ENCODE measurements at regions of chr9 and their contacts with region 1.

Region 1: GRCh38 chr9:113657703-113658544 is 194.4 kb downstream of the RGS3 start:
- DNase-seq: peak; percentile 82 to 91
- ATAC-seq: peak; percentile 85 to 93 (median 90)
- H3K4me3 ChIP-seq: no peak overlapping the region
- H3K27ac ChIP-seq: no peak overlapping the region
- H3K4me1 ChIP-seq: peaks cover 22% of the 10 kb centered on the region
- H3K27me3 ChIP-seq: no peaks in the 10 kb centered on the region
- CTCF ChIP-seq: peak; percentile 97

Region 2: DNA sequence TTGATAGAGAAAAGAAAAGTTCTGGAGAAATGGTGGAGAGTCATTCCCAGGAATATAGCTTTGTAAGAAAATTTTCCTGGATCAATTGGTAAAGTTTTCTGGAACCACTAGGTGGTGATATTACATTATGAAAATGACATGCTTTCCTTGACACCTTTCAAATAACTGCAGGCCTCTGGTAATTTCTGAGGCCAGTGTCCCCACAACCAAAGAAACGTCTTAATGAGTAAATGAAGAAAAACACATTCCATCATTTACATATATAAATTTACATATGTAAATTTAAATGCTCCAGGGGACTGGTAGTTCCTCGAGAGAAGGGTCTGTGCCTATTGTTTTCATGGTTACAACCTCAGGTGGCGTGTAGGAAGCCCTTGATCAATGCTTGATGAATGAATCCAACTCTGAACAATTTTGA is 211.6 kb before region 1 on chr9:
- intact Hi-C with region 1: loop called (anchors 2 kb)
- DNase-seq: no peak
- ATAC-seq: peak; percentile 48 to 89 (median 70)
- H3K4me3 ChIP-seq: no peak overlapping the region
- H3K27ac ChIP-seq: no peak overlapping the region
- H3K4me1 ChIP-seq: no peaks in the 10 kb centered on the region
- H3K27me3 ChIP-seq: no peaks in the 10 kb centered on the region
- CTCF ChIP-seq: peak; percentile 72

Region 3: DNA sequence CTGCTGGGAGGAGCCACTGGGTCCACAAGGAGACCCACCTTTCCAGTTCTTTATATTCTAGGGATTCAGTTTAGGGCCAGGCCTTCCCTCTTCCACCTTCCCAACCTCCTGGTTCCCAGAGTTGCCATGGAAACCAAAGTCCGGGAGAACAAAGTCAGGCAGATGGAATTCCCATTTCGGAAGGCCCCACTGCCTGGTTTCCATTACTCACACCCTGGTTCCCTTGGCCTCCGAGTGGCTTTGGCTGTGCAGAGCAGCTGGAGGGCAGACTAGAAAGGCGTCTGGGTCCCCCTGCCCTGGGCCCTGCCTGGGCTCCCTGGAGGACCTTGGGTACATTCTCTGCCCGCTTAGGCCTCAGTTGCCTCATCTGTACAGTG is 58.3 kb before region 1 on chr9:
- intact Hi-C with region 1: no loop called
- DNase-seq: peak in 1 of 2 donors; percentile 55
- ATAC-seq: peak in 2 of 4 donors; percentile 17 to 38
- H3K4me3 ChIP-seq: no peak overlapping the region
- H3K27ac ChIP-seq: peak overlapping the region; percentile 37
- H3K4me1 ChIP-seq: peaks cover 54% of the 10 kb centered on the region
- H3K27me3 ChIP-seq: no peaks in the 10 kb centered on the region
- CTCF ChIP-seq: no peak

Measured in psoas muscle (tissue), 8 donors.